Psoas muscle (tissue), 8 donors: ENCODE measurements at regions of chr2 and their contacts with region 1.

Region 1: DNA sequence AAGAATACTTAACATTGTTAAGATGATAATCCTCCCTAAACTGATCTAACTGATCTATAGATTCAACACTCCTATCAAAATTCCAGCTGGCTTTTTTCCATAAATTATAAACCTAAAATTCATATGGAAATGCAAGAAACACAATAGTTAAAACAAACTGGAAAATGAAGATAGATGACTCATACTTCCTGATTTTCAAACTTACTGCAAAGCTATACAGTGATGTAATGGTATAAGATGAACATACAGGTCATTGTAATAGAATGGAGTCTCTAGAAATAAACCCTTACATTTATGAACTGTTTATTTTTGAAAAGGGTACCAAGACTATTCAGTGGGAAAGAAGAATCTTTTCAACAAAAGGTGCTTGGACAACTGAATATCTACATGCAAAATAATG is 32.3 kb downstream of the UBXN4 start:
- DNase-seq: no peak
- ATAC-seq: no peak
- H3K4me3 ChIP-seq: no peak overlapping the region
- H3K27ac ChIP-seq: no peak overlapping the region
- H3K4me1 ChIP-seq: no peaks in the 10 kb centered on the region
- H3K27me3 ChIP-seq: no peaks in the 10 kb centered on the region
- CTCF ChIP-seq: no peak

Region 2: DNA sequence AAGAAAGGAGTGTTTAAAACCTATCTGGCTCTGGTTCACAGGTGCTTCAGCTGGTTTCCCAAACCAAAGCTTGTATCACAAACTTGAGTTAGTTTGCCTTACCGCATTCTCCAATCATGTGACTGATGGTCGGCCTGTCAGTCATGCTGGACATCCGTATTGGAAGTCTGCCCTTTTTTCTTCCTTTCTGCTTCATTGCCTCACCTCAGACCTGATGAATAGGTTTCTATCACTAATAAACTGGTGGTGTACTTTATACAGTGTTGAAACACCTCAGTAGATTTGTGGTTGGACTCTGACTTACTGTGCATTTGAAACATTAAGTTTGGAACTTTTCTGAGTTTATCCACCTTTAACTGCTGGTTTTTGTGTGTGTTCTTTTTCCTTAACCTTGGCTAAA is 158.5 kb before region 1 on chr2:
- intact Hi-C with region 1: no loop called
- DNase-seq: no peak
- ATAC-seq: no peak
- H3K4me3 ChIP-seq: no peak overlapping the region
- H3K27ac ChIP-seq: no peak overlapping the region
- H3K4me1 ChIP-seq: no peaks in the 10 kb centered on the region
- H3K27me3 ChIP-seq: no peaks in the 10 kb centered on the region
- CTCF ChIP-seq: no peak

Region 3: DNA sequence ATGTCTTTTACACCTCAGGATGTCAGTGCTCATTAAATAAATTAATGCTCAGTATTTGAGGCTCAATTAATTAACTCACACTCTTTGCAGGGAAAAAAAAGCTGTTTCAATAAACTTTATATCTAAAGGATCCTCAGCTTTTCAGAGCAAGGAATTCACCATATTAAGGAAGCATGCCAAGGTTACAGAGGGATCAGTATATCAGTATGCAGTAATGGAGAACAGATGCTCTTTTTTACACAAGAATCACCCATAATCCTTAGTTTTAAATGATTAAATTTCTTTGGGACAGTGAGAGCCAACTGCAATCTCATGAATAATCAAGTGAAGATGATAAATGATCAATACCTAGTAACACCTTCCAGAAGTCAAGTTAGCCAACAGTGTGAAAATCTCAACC is 77.9 kb after region 1 on chr2:
- intact Hi-C with region 1: loop called in 1 of 2 experiments (anchors 10 kb)
- DNase-seq: no peak
- ATAC-seq: no peak
- H3K4me3 ChIP-seq: no peak overlapping the region
- H3K27ac ChIP-seq: no peak overlapping the region
- H3K4me1 ChIP-seq: no peaks in the 10 kb centered on the region
- H3K27me3 ChIP-seq: no peaks in the 10 kb centered on the region
- CTCF ChIP-seq: no peak